Mammary epithelial cell (primary cell): ENCODE measurements at regions of chr10 and their contacts with region 1.

Region 1: DNA sequence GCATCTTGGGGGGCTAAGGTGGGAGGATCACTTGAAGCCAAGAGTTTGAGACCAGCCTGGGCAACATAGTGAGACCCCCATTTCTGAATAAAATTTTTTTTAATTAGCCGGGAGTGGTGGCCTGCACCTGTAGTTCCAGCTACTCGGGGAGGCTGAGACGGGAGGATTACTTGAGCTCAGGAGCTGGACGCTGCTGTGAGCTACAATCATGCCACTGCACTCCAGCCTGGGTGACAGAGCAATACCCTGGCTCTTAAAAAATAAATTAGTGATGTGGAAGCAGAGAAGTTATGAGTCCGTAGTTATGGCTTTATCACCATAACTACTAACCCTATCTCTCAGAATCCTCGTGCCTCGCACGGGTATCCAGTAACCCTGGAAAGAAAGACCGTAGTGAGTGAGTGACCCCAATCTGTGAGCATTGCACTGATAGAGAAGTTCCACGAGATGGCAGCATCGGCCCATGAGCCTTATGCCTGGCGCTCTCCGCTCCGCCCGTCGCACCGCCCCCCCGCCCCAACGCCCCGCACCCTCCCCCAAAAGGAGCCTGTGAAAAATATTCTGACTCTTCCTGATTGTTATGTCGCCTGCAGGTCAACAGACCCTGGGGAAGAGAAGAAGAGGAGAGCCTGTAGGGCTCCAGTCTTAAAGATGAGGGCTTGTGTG is 4.9 kb upstream of the SLC29A3 start:
- DNase-seq: no peak
- H3K4me3 ChIP-seq: no peak overlapping the region
- H3K27ac ChIP-seq: no peak overlapping the region
- H3K4me1 ChIP-seq: no peaks in the 10 kb centered on the region
- H3K27me3 ChIP-seq: no peaks in the 10 kb centered on the region
- CTCF ChIP-seq: peak; percentile 67 to 76

Region 2: GRCh38 chr10:71372882-71373495 is 58.8 kb after region 1 on chr10:
- CTCF ChIA-PET with region 1: interaction called, 8 read pairs
- dilution Hi-C with region 1: no loop called
- in situ Hi-C with region 1: no loop called
- intact Hi-C with region 1: loop called (anchors 1 kb)
- DNase-seq: no peak
- H3K4me3 ChIP-seq: no peak overlapping the region
- H3K27ac ChIP-seq: no peak overlapping the region
- H3K4me1 ChIP-seq: peaks cover 10% of the 10 kb centered on the region
- H3K27me3 ChIP-seq: no peaks in the 10 kb centered on the region
- CTCF ChIP-seq: no peak

Region 3: GRCh38 chr10:71473671-71474599 is 159.8 kb after region 1 on chr10:
- CTCF ChIA-PET with region 1: no interaction called
- dilution Hi-C with region 1: no loop called
- in situ Hi-C with region 1: no loop called
- intact Hi-C with region 1: loop called (anchors 5 kb)
- DNase-seq: no peak
- H3K4me3 ChIP-seq: no peak overlapping the region
- H3K27ac ChIP-seq: no peak overlapping the region
- H3K4me1 ChIP-seq: no peaks in the 10 kb centered on the region
- H3K27me3 ChIP-seq: peaks cover 3% of the 10 kb centered on the region
- CTCF ChIP-seq: no peak